ENCODE measurements at regions of chr19 and their contacts with region 1.

Region 1: DNA sequence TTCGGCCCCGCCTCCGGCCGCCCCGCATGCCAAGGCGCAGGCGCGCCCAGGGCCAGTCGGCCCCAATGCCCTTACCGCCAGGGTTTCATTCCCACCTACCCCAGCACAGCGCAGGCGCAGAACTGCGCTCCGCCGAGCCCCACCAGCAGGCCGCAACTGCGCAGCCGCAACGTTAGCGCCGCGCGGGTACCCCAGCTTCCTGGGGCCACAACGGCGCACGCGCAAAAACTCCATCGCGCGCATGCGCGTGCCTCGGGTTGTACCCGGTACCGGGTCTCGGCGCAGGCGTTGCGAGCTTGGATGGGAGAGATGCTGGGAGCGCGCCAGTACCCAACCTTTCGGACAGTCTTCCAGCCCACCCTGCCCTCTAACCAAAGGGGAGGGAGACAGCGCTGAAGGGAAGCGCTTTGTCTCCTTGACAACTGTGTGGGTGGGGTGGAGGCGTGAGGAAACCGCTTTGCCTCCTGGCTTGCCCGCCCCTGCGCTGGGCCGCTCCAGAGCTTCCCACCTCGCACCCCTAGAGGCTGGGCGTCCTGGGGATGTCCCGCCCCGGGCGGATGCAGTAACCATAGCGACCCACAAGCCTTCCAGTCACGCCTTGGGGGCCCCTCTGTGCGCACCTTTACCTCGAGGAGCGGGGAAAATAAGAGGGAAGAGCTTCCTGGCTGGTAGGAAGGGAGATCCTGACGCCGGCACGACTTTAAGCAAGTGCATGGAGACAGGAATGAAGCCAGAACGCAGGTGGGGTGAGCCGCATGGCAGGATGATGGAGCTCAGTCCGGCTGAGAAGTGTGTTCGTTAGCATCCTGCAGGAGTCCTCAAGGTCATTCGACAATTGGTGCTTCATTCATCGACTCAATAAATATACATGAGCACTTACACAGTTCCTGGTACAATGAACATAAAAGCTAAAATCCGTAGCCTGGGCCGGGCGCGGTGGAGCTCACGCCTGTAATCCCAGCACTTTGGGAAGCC is 525 bp upstream of the MYPOP start:
- DNase-seq: peak; percentile 98 to 100
- ATAC-seq: peak; percentile 86 to 95
- H3K4me3 ChIP-seq: peak overlapping the region; percentile 78
- H3K27ac ChIP-seq: peak overlapping the region; percentile 89 to 93
- H3K4me1 ChIP-seq: peaks cover 17% of the 10 kb centered on the region
- CTCF ChIP-seq: no peak
- EP300 ChIP-seq: no peak
- POLR2A ChIP-seq: peak; percentile 94
- RAD21 ChIP-seq: no peak

Region 2: DNA sequence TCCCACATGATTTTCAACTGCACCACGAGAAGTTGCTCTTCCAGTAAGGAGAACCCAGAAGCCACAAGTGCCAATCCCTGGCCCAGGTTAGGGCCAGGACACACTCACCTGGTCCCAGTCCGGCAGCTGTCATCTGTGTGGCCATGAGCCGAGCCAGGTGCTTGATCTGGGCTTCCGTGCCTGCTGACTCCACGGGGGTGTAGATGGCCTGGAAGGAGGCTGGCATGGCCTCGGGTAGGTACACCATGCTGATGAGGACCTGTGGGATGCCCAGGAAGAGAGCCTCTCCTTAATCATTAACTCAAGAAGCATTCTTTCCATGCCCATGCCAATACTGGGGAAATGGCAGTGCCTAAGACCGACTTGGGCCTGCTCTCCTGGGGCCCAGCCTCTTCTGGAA is 68.0 kb before region 1 on chr19:
- CTCF ChIA-PET with region 1: no interaction called
- POLR2A ChIA-PET with region 1: no interaction called
- DNase-seq: no peak
- ATAC-seq: peak; percentile 13 to 33; a peak in 1 of 6 replicates
- H3K4me3 ChIP-seq: no peak overlapping the region
- H3K27ac ChIP-seq: no peak overlapping the region
- H3K4me1 ChIP-seq: no peaks in the 10 kb centered on the region
- CTCF ChIP-seq: no peak
- EP300 ChIP-seq: no peak
- POLR2A ChIP-seq: no peak
- RAD21 ChIP-seq: no peak

Region 3: DNA sequence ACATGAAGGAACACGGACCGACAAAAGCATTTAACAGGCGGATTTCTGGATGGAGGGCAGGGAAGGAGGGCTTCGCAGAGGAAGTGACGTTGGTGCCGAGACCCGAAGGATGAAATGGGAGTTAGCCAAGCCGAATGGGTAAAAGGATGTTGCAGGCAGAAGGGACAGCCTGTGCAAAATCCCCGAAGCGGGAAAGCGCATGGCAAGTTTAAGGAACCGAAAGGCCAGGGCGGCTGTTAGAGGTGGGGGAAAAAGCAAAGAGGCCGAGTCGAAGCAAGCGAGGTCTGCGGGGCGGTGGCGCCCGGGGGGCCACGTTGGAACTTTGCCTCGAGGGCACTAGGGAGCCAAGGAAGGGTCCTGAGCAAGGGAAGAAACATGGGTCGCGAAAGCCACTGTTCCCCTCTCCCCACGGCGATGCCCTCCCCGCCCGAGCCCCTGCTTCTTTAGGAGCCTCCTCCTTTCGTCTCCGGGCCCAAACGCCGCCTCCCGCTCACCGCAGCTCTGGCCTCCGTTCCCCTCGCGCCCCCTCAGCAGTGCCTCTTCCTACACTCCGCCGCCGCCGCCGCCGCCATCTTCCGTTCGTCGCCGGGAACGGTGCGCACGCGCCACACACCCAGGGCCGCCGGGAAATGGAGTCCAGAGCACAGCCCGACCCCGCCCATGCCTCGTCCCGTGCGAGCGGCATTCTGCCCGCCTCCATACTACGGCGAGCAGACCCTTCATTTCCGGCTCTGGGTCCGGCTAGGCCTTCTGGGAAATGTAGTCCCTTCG is 40.2 kb before region 1 on chr19 and contains the start of gene SYMPK:
- CTCF ChIA-PET with region 1: interaction called, 24 read pairs
- POLR2A ChIA-PET with region 1: interaction called, 8 read pairs
- DNase-seq: peak; percentile 99 to 100
- ATAC-seq: peak; percentile 92 to 96
- H3K4me3 ChIP-seq: peak within 1 kb of the TSS; percentile 71
- H3K27ac ChIP-seq: peak within 1 kb of the TSS; percentile 88
- H3K4me1 ChIP-seq: peaks cover 25% of the 10 kb centered on the region
- CTCF ChIP-seq: no peak
- EP300 ChIP-seq: no peak; a peak in 1 of 5 replicates
- POLR2A ChIP-seq: peak; percentile 59
- RAD21 ChIP-seq: no peak
- polyA plus RNA-seq, gene SYMPK: 92.6 and 105 TPM in 2 replicates

Region 4: DNA sequence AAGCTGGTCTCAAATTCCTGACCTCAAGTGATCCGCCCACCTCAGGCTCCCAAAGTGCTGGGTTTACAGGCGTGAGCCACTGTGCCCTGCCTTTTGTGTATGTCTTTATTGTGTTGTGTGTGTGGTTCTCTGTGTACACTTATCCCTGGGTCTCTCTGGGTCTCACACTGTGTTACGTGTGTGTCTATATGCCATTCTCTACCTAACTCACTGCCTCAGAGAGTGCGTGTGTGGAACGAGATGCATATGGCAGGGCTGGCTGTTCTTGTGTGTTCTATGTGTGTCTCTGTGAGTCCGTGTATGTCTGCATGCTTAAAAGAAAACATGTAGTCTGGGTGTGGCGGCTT is 28.3 kb before region 1 on chr19:
- CTCF ChIA-PET with region 1: no interaction called
- POLR2A ChIA-PET with region 1: no interaction called
- DNase-seq: no peak
- ATAC-seq: no peak
- H3K4me3 ChIP-seq: no peak overlapping the region
- H3K27ac ChIP-seq: no peak overlapping the region
- H3K4me1 ChIP-seq: no peaks in the 10 kb centered on the region
- CTCF ChIP-seq: no peak
- EP300 ChIP-seq: no peak
- POLR2A ChIP-seq: no peak
- RAD21 ChIP-seq: no peak

Region 5: GRCh38 chr19:45913874-45914830 is 11.2 kb after region 1 on chr19 and contains the start of gene NANOS2:
- CTCF ChIA-PET with region 1: interaction called, 15 read pairs
- POLR2A ChIA-PET with region 1: interaction called, 3 read pairs
- DNase-seq: peak in 1 of 2 experiments; percentile 64
- ATAC-seq: peak; percentile 25 to 78; a peak in 5 of 6 replicates
- H3K4me3 ChIP-seq: no peak within 1 kb of the TSS
- H3K27ac ChIP-seq: no peak within 1 kb of the TSS
- H3K4me1 ChIP-seq: no peaks in the 10 kb centered on the region
- CTCF ChIP-seq: peak; percentile 21; the same call in 1 of the 3 replicates
- EP300 ChIP-seq: no peak
- POLR2A ChIP-seq: no peak
- RAD21 ChIP-seq: peak; percentile 37 to 64; a peak in 4 of 5 replicates
- polyA plus RNA-seq, gene NANOS2: not detected in 2 replicates

Region 6: DNA sequence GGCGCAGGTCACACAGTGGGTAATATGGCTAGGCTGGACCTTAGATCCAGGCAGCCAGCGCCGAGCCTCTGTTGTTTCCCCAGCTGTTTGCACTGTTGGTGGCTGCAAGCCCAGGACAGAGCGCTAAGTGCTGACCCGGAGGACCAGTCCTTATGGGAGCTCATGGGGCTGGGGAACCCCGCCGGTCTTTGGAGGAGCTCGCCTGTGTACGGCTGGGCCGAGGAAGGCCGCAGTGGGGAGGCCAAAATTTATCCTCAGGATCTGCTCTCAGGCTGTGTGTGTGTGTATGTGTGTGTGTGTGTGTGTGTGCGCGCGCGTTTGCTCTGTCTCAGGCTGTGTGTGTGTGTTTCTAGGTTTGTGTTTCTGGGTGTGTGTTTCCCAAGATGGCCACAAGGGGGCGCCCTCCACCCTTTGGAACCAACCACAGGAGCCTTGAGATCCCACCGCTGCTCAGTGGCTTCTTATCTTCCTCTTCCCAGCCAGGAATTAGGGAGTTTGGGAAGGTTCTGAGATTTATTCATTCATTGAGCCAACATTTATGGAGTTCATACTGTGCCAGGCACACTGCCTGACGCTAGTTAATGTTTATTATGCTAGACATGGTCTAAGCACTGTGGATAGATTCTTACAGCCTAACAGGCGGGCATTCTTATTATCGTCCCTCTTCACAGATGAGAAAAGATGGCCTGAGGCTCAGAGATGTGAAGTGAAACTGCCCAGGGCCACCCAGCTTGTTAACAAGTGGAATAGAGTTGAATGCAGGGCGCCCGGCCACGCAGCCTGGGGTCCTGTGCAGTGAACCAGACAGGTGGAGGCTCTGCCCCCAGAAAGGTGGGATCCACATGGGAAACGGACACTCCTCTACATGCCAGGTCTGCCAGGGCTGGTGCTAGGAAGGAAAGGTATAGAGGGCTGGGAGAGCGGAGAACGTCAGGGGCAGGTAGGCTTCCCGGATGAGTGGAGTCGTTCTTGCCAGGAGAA is 106.9 kb after region 1 on chr19:
- CTCF ChIA-PET with region 1: interaction called, 10 read pairs
- POLR2A ChIA-PET with region 1: interaction called, 3 read pairs
- DNase-seq: peak; percentile 81
- ATAC-seq: peak; percentile 90 to 96
- H3K4me3 ChIP-seq: no peak overlapping the region
- H3K27ac ChIP-seq: no peak overlapping the region
- H3K4me1 ChIP-seq: peaks cover 7% of the 10 kb centered on the region; the same call in 1 of the 3 replicates
- CTCF ChIP-seq: peak; percentile 95
- EP300 ChIP-seq: no peak
- POLR2A ChIP-seq: no peak
- RAD21 ChIP-seq: peak; percentile 61 to 68

Measured in A549 (cell line).